ENCODE measurements at regions of chrX and their contacts with region 1.

Region 1: DNA sequence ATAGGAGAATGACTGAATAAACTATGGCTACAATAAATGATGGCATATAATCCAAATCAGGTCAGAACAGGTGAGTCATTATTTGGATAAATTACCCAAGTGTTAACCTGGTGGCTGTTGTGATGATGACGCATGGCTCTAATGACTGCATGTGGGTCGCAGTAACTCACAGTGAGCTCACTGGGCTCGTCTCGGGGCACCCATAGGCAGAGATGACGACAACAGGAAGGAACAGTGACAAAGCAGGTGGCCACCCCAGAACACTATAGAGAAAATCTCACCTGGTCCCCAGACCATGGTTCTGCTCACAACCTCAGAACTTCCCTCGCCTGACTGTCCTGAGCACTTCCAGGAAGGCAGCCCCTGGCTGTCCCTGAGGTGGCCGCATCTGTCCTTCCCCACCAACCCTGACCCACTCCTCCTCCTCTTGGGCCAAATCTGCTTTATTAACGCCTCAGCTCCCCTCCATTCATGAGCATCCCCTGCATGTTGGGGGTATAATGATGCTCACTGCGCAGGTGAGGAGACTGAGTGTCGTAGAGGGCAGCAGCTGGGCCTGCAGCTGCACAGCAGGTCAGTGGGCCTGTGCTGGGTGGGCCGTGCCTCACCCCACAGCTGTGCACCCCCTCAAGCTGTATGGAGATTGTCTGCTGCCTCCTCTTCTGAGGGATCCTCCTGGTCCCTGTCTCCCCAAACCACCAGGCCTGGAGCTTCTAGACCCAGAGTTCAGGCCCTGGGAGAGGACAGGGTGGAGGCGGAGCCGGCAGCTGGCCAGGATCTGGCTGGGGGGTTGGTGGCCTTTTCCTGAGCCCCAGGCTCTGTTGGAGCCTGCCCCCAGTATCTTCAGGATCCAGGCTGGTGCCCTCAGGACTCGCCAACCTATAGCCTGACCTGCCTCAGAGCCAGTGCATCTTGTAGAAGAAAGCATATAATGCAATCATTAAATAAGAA is 30.9 kb upstream of the FAM156A start:
- DNase-seq: no peak
- H3K4me3 ChIP-seq: no peak overlapping the region
- H3K27me3 ChIP-seq: no peaks in the 10 kb centered on the region
- CTCF ChIP-seq: no peak

Region 2: GRCh38 chrX:53004038-53004437 is 14.8 kb after region 1 on chrX:
- CTCF ChIA-PET with region 1: interaction called, 10 read pairs
- POLR2A ChIA-PET with region 1: no interaction called
- DNase-seq: no peak
- H3K4me3 ChIP-seq: no peak overlapping the region
- H3K27me3 ChIP-seq: peaks cover 5% of the 10 kb centered on the region
- CTCF ChIP-seq: no peak